Heart left ventricle (tissue), 16 donors: ENCODE measurements at regions of chr2 and their contacts with region 1.

Region 1: GRCh38 chr2:1742681-1743395 is 1.5 kb downstream of the PXDN start:
- DNase-seq: peak; percentile 79 to 84 (median 81)
- ATAC-seq: peak; percentile 34 to 70 (median 46)
- H3K4me3 ChIP-seq: peak overlapping the region; percentile 61 to 96 (median 78)
- H3K27ac ChIP-seq: peak overlapping the region; percentile 60 to 98 (median 92)
- H3K4me1 ChIP-seq: peaks cover 0 to 69% (median 36%) of the 10 kb centered on the region in 12 donors
- H3K27me3 ChIP-seq: peaks cover 0 to 19% (median 0%) of the 10 kb centered on the region in 9 donors
- CTCF ChIP-seq: peak; percentile 16 to 71 (median 54)
- POLR2A ChIP-seq: peak in 1 of 2 donors; percentile 16

Region 2: DNA sequence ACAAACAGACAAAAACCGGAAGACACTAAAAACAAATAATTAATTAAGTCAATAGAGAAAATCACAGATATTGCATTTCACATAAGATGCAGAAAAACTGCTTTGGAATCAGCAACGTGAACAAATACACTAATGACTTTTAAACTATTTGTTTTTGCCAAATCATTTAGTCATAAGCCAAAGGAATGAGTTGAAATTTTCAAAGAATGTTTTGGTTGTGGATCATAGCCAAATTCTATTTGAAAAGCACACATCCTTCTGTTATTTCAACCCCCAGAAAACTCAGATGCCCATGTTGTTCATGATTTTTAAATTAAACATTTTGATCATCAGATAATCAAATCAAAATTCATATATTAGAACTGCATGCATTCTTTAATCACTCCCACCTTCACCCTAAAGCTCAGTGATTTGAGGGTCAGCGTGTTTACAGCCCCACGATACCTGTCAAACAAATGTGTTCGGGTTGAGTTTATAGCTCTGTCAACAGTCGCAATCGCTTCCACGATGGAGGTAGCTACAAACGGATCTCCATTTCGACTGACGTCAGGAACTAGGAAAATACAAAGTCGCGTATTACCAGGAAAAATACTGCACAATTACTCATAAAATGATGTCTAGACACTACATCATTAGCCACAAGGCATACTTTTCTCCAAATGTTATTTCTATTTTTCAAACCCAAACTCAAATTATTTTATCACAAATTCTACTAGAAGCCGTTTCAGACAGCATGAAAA is 88.7 kb before region 1 on chr2:
- intact Hi-C with region 1: loop called in 8 of 10 experiments (anchors 2 to 10 kb)
- DNase-seq: peak in 1 of 5 donors; percentile 27
- ATAC-seq: peak in 2 of 4 donors; percentile 20 to 59
- H3K4me3 ChIP-seq: peak overlapping the region in 1 of 12 donors; percentile 12
- H3K27ac ChIP-seq: peak overlapping the region; percentile 28 to 92 (median 68)
- H3K4me1 ChIP-seq: peaks cover 0 to 49% (median 24%) of the 10 kb centered on the region in 12 donors
- H3K27me3 ChIP-seq: no peaks in the 10 kb centered on the region
- CTCF ChIP-seq: no peak
- POLR2A ChIP-seq: no peak

Region 3: GRCh38 chr2:1665745-1666505 is 76.9 kb before region 1 on chr2:
- intact Hi-C with region 1: loop called in 2 of 10 experiments (anchors 5 kb)
- DNase-seq: peak in 1 of 5 donors; percentile 49
- ATAC-seq: no peak
- H3K4me3 ChIP-seq: no peak overlapping the region
- H3K27ac ChIP-seq: no peak overlapping the region
- H3K4me1 ChIP-seq: no peaks in the 10 kb centered on the region
- H3K27me3 ChIP-seq: no peaks in the 10 kb centered on the region
- CTCF ChIP-seq: no peak
- POLR2A ChIP-seq: no peak

Region 4: DNA sequence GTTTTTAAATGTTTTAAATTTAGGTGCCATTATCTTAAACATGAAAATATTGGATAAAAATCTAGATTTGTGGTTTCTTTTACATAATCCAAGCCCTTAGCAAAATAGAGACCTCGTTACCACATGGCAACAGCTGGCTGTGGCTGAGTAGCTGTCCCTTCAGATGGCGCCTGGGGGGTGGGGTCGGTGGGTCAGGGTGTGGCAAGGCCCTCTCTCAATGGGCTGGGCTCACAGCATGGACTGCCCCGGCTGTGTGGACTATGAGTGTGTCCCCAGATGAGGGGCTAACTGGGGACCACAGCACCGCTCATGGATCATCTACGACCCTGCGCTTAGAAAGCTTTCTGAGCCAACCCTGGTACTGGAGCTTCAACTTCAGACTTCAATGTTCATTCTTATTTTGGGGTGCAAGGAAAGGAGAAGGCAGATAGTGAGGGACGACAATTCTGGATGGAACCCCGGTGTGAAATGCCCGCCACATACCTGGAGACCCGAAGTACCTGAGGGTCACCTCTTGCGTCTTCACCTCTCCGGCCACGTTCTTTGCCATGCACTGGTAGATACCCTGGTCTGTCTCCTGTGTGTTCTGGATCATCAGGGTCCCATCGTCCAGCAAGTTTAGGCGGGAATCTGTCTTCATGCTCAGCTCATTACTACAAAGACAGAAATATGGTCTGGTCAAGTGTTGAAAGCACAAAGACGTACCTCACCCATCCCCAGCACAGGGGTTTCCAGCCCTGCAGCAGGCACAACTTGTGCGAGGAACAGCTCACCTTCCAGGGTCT is 69.5 kb before region 1 on chr2:
- intact Hi-C with region 1: loop called in 2 of 10 experiments (anchors 5 kb)
- DNase-seq: no peak
- ATAC-seq: peak in 1 of 4 donors; percentile 6
- H3K4me3 ChIP-seq: no peak overlapping the region
- H3K27ac ChIP-seq: no peak overlapping the region
- H3K4me1 ChIP-seq: peaks cover 0 to 6% (median 0%) of the 10 kb centered on the region in 12 donors
- H3K27me3 ChIP-seq: no peaks in the 10 kb centered on the region
- CTCF ChIP-seq: no peak
- POLR2A ChIP-seq: no peak

Region 5: DNA sequence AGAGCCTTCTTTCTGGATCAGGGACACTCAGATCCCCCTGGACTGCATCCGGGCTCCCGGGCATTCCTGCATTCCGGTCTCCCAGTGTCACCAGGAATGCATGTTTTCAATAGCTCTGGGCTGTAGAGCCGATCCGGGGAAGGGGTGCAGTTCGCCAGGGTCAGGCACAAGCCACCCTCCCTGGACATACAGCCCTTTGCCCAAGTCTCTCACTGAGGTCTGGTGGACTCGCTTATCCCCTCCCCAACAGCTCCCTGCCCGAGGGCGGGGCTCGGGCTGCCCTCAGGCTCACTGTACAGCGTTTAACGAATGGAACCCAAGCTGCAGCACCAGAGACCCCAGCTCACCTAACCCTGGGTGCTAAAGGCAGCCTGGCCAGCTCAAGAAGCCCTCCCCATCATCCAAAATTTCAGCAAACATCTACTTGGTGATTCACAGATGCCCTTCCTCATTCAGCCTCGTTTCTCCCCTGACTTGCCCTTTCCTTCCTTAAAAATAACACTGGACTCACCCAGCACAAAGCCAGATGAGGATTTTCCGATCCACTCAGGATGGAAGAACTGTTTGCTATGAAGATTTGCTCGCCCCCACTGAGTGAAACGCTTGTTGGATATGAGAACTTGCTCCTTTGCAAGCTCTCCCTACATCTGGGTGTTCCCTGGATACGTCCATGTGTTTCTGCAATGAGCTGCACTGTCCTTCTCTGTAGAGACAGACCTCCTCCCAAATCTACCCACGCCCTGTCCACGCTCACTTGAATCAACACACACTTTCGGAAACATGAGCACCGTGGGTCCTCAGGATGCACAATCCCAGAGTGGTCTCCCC is 56.7 kb before region 1 on chr2:
- intact Hi-C with region 1: loop called in 1 of 10 experiments (anchors 10 kb)
- DNase-seq: no peak
- ATAC-seq: peak in 3 of 4 donors; percentile 20 to 42 (median 25)
- H3K4me3 ChIP-seq: no peak overlapping the region
- H3K27ac ChIP-seq: no peak overlapping the region
- H3K4me1 ChIP-seq: peaks cover 0 to 12% (median 4%) of the 10 kb centered on the region in 12 donors
- H3K27me3 ChIP-seq: no peaks in the 10 kb centered on the region
- CTCF ChIP-seq: no peak
- POLR2A ChIP-seq: no peak

Region 6: DNA sequence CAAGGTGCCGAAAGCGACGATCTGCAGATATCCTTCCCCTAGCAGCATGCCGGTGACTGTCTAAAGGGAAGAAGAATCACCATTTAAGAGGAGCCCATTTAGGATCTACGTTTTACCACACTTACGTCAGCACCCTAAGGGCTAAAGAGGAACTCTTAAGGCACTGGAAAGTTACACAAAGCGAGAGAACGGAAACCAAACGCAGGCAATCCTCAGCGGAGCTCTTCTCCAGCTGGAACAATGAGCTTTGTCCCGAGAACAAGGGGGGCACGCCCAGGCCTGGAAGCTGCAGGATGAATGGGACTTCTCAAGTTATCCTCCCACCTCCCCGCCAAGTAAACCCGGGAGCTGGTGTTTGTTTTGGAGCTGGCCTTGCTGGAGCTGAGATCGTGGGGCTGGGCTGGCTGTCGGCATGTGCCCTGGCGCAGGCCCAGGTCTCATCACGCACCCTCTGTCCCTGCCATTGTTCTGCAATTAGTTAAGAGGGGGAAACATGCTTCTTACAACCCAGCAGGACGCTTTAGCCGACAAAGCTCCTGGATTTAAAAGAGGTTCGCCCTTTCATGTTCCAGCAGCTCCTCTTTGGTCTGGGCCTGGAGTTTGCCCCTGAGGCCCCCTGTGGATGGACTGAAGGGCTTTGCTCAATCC is 34.9 kb before region 1 on chr2:
- intact Hi-C with region 1: loop called in 7 of 10 experiments (anchors 2 to 5 kb)
- DNase-seq: peak; percentile 85 to 90 (median 86)
- ATAC-seq: peak; percentile 72 to 94 (median 88)
- H3K4me3 ChIP-seq: peak overlapping the region in 6 of 12 donors; percentile 3 to 28 (median 10)
- H3K27ac ChIP-seq: peak overlapping the region; percentile 54 to 88 (median 79)
- H3K4me1 ChIP-seq: peaks cover 0 to 52% (median 33%) of the 10 kb centered on the region in 12 donors
- H3K27me3 ChIP-seq: no peaks in the 10 kb centered on the region
- CTCF ChIP-seq: no peak
- POLR2A ChIP-seq: peak in 1 of 2 donors; percentile 8

Region 7: DNA sequence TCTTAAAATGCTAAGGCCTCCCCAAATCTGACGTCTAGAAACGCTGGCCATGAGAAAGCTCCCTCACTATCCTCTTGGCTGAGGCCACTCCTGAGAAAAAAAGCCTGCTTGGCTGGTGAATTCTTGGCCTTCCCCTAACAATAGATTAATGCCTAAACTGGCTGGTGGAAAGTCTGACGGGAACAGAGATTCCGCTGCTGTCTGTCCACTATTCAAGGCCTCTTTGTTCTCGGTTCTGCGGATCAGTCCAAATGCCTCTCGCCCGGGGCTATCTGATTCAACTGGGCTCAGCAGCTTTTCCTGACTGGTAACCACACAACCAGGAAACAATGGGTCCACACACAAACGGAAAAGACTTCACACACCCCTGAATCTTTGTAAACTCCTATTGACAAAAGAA is 25.7 kb before region 1 on chr2:
- intact Hi-C with region 1: loop called in 1 of 10 experiments (anchors 5 kb)
- DNase-seq: peak in 3 of 5 donors; percentile 57 to 71 (median 64)
- ATAC-seq: peak; percentile 28 to 60 (median 48)
- H3K4me3 ChIP-seq: no peak overlapping the region
- H3K27ac ChIP-seq: peak overlapping the region; percentile 13 to 87 (median 68)
- H3K4me1 ChIP-seq: peaks cover 7 to 78% (median 53%) of the 10 kb centered on the region in 12 donors
- H3K27me3 ChIP-seq: no peaks in the 10 kb centered on the region
- CTCF ChIP-seq: no peak
- POLR2A ChIP-seq: no peak